Activated T-helper 1 cell treated with anti-CD3 and anti-CD28 coated beads, Interleukin-12 subunit alpha, Interleukin-12 subunit beta, Interleukin-2, Interleukin-4 antibody, amounts not matched to agents 30 ng/mL and 10 ng/mL and 1 ng/mL, durations not matched to agents 14 hours and 24 hours and 36 hours (primary cell): ENCODE measurements at regions of chr9 and their contacts with region 1.

Region 1: GRCh38 chr9:27785714-27786100 is 212.4 kb upstream of the C9orf72 start:
- DNase-seq: no peak
- H3K4me3 Mint-ChIP-seq: no peak overlapping the region
- H3K27ac Mint-ChIP-seq: peak overlapping the region; percentile 59
- H3K4me1 Mint-ChIP-seq: peaks cover 14% of the 10 kb centered on the region
- H3K27me3 Mint-ChIP-seq: peaks cover 5% of the 10 kb centered on the region

Region 2: GRCh38 chr9:27714388-27714787 is 71.3 kb before region 1 on chr9:
- intact Hi-C with region 1: no loop called
- DNase-seq: no peak
- H3K4me3 Mint-ChIP-seq: no peak overlapping the region
- H3K27ac Mint-ChIP-seq: no peak overlapping the region
- H3K4me1 Mint-ChIP-seq: no peaks in the 10 kb centered on the region
- H3K27me3 Mint-ChIP-seq: peaks cover 2% of the 10 kb centered on the region

Region 3: GRCh38 chr9:27732494-27732893 is 53.2 kb before region 1 on chr9:
- intact Hi-C with region 1: loop called (anchors 1 kb)
- DNase-seq: no peak
- H3K4me3 Mint-ChIP-seq: no peak overlapping the region
- H3K27ac Mint-ChIP-seq: peak overlapping the region; percentile 18
- H3K4me1 Mint-ChIP-seq: peaks cover 22% of the 10 kb centered on the region
- H3K27me3 Mint-ChIP-seq: peaks cover 5% of the 10 kb centered on the region